Heart left ventricle (tissue), 16 donors: ENCODE measurements at regions of chr20 and their contacts with region 1.

Region 1: GRCh38 chr20:34834459-34834893 is 9.0 kb upstream of the NCOA6 start:
- DNase-seq: no peak
- ATAC-seq: no peak
- H3K4me3 ChIP-seq: no peak overlapping the region
- H3K27ac ChIP-seq: no peak overlapping the region
- H3K4me1 ChIP-seq: no peaks in the 10 kb centered on the region
- H3K27me3 ChIP-seq: no peaks in the 10 kb centered on the region
- CTCF ChIP-seq: peak; percentile 34 to 64 (median 50)
- POLR2A ChIP-seq: no peak

Region 2: DNA sequence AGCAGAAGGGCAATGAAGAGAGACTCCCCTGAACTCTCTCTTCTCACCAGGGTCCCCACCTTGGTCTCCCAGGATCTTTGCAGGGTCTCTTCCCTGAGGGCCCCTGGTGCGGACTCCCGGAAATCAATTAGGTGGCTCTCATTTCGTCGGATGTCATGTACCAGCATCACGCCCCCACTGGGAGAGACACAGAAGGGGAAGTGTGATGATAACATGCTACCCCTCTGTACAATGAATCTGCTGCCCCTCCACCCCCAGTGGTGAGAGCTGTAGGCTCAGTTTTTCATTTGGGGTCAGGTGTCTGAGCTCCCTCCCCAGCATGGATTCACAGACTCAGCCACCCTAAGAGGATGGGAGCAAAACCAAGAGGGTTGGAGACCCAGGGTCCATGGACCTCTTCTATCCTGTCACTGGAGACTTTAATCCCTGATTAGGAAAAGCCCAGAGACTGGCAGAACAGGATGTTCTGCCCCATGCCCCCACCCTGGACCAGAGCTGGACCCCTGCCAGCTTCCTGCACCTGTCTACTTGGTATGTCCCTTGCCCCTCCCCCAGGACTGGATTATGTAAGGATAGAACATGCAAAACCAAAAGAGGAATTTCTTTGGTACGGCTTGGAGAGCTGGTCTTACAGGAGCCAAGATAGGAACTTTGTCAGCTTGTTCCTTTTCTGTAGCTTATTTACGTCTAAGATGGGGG is 27.1 kb after region 1 on chr20:
- intact Hi-C with region 1: no loop called
- DNase-seq: no peak
- ATAC-seq: no peak
- H3K4me3 ChIP-seq: no peak overlapping the region
- H3K27ac ChIP-seq: no peak overlapping the region
- H3K4me1 ChIP-seq: peaks cover 0 to 8% (median 0%) of the 10 kb centered on the region in 12 donors
- H3K27me3 ChIP-seq: no peaks in the 10 kb centered on the region
- CTCF ChIP-seq: no peak
- POLR2A ChIP-seq: no peak

Region 3: DNA sequence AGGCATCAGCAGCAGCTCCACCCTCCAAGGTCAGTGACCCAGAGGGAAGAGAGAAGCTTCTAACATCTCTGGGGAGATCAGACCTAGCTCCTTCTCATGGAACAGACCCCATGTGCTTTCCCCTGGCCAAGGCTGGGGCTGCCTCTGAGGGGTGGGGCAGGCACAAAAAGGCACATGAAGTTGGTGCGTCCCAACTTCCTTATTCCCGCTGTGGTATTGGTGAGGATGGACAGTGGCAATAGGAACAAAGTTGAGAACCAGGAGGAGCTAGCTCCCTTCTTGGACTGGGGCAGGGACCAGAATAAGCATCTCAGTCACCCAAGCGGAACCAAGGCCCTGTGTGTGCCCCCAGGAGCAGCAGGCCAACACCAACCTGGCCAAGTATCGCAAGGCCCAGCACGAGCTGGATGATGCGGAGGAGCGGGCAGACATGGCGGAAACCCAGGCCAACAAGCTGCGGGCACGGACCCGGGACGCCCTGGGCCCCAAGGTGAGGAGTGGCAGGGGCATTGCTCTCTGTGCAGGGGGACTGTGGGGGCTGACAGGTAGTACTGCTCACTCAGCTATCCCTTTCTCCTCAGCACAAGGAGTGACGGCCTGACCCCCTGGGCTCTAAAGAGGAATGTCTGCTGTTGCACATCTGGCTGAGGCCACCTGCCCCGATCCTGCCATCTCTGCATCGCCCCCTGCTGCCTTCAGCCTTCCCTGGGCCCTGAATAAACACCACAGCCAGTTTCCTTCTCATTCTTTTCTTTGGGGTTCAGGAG is 167.3 kb after region 1 on chr20:
- intact Hi-C with region 1: no loop called
- DNase-seq: peak in 2 of 5 donors; percentile 27 to 53
- ATAC-seq: peak in 1 of 4 donors; percentile 0
- H3K4me3 ChIP-seq: no peak overlapping the region
- H3K27ac ChIP-seq: peak overlapping the region in 1 of 12 donors; percentile 61
- H3K4me1 ChIP-seq: peaks cover 0 to 17% (median 0%) of the 10 kb centered on the region in 12 donors
- H3K27me3 ChIP-seq: no peaks in the 10 kb centered on the region
- CTCF ChIP-seq: peak in 2 of 12 donors; percentile 14 to 26
- POLR2A ChIP-seq: no peak

Region 4: DNA sequence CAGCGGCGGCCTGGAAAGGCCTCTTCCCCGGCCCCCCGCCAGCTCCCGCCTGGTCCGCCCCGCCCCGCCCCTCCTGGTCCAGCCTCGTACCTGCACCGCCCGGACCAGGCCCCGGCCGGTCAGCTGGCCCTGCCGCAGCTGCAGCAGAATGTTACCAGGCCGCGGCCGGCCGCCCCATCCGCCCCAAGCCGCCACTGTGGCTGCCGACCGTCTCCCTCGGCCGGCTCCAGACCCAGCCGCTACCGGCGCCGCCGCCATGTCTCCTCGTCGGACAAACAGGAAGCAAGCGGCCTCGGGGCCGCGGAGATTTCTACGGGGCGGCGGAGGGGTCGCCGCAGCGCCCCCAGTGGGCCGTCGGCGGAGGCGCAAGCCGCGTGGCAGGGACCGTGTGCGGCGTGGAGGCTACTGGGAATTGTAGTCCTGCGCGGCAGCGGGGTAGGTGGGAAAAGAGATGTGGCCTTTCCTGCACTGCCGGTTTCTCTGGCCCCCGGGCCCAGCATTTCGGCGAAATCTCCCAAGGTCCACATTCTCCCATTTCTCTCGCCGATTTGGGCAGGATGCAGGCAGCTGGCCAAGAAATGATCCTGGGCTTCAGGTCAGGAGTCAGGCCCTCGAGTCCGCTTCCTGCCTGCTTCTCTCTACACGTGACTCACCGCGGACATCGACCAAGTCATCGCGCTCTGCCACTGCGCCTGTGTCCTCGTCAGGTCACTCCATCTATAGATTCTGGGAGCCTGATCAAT is 258.2 kb after region 1 on chr20 and contains the start of gene TRPC4AP:
- intact Hi-C with region 1: loop called in 2 of 10 experiments (anchors 5 to 10 kb)
- DNase-seq: peak; percentile 89 to 96 (median 91)
- ATAC-seq: peak; percentile 85 to 97 (median 94)
- H3K4me3 ChIP-seq: peak within 1 kb of the TSS; percentile 68 to 97 (median 84)
- H3K27ac ChIP-seq: peak within 1 kb of the TSS; percentile 76 to 97 (median 92)
- H3K4me1 ChIP-seq: peaks cover 4 to 47% (median 35%) of the 10 kb centered on the region in 12 donors
- H3K27me3 ChIP-seq: no peaks in the 10 kb centered on the region
- CTCF ChIP-seq: peak in 11 of 12 donors; percentile 94 to 99 (median 97)
- POLR2A ChIP-seq: peak in 1 of 2 donors; percentile 63
- total RNA-seq, gene TRPC4AP: 31.5 to 51.8 (median 38.6) TPM

Region 5: DNA sequence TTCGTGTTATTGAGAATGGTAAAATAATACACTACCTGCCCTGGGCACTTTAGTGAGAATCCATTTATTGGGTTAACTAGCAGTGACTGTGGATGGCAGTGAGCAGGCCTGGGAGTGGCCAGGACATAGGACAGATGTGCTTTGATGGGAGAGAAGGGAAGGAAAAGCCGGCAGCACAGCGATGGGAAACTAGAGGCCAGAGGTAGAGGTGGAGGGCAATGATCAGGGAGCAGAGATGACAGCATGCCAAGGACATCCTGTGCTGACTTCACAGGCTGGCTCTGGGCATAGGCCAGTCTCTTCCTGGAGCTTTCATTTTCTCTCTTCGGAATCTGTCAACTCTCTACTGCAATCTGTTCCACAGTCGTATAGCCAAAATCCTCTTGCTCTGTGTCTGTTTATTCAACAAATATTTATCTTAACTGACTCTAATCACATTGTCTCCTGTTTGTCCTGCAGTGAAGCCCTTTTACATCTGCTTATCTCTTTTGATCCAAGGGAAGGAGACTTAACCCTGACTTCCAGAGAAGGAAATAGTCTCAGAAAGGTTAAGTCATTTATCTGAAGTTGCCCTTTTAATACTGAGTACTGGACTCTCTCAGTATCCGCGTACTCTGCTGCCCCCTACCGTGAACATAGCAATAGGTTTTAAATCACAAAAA is 373.6 kb after region 1 on chr20:
- intact Hi-C with region 1: loop called in 3 of 10 experiments (anchors 5 to 10 kb)
- DNase-seq: peak; percentile 78 to 89 (median 83)
- ATAC-seq: peak; percentile 91 to 96 (median 94)
- H3K4me3 ChIP-seq: peak overlapping the region in 8 of 12 donors; percentile 2 to 35 (median 22)
- H3K27ac ChIP-seq: peak overlapping the region; percentile 19 to 80 (median 71)
- H3K4me1 ChIP-seq: peaks cover 0 to 13% (median 6%) of the 10 kb centered on the region in 12 donors
- H3K27me3 ChIP-seq: no peaks in the 10 kb centered on the region
- CTCF ChIP-seq: peak; percentile 75 to 88 (median 82)
- POLR2A ChIP-seq: no peak

Region 6: GRCh38 chr20:35215066-35215956 is 380.8 kb after region 1 on chr20:
- intact Hi-C with region 1: loop called in 1 of 10 experiments (anchors 10 kb)
- DNase-seq: no peak
- ATAC-seq: no peak
- H3K4me3 ChIP-seq: no peak overlapping the region
- H3K27ac ChIP-seq: no peak overlapping the region
- H3K4me1 ChIP-seq: no peaks in the 10 kb centered on the region
- H3K27me3 ChIP-seq: no peaks in the 10 kb centered on the region
- CTCF ChIP-seq: no peak
- POLR2A ChIP-seq: no peak

Region 7: GRCh38 chr20:35277531-35278395 is 443.3 kb after region 1 on chr20 and contains the start of gene MMP24OS:
- intact Hi-C with region 1: loop called in 1 of 10 experiments (anchors 10 kb)
- DNase-seq: peak; percentile 91 to 96 (median 95)
- ATAC-seq: peak; percentile 87 to 96 (median 94)
- H3K4me3 ChIP-seq: peak within 1 kb of the TSS; percentile 56 to 100 (median 88)
- H3K27ac ChIP-seq: peak within 1 kb of the TSS; percentile 88 to 100 (median 98)
- H3K4me1 ChIP-seq: peaks cover 2 to 36% (median 13%) of the 10 kb centered on the region in 12 donors
- H3K27me3 ChIP-seq: no peaks in the 10 kb centered on the region
- CTCF ChIP-seq: peak in 6 of 12 donors; percentile 12 to 43 (median 23)
- POLR2A ChIP-seq: peak; percentile 88 to 96
- total RNA-seq, gene MMP24OS: 17.5 to 64.8 (median 41.6) TPM

Region 8: GRCh38 chr20:35432430-35432735 is 597.9 kb after region 1 on chr20:
- intact Hi-C with region 1: loop called in 1 of 10 experiments (anchors 10 kb)
- DNase-seq: no peak
- ATAC-seq: no peak
- H3K4me3 ChIP-seq: no peak overlapping the region
- H3K27ac ChIP-seq: no peak overlapping the region
- H3K4me1 ChIP-seq: no peaks in the 10 kb centered on the region
- H3K27me3 ChIP-seq: no peaks in the 10 kb centered on the region
- CTCF ChIP-seq: no peak
- POLR2A ChIP-seq: no peak

Region 9: GRCh38 chr20:35447082-35447789 is 612.8 kb after region 1 on chr20:
- intact Hi-C with region 1: loop called in 3 of 10 experiments (anchors 10 kb)
- DNase-seq: peak; percentile 74 to 91 (median 81)
- ATAC-seq: peak; percentile 67 to 90 (median 88)
- H3K4me3 ChIP-seq: peak overlapping the region in 11 of 12 donors; percentile 10 to 51 (median 38)
- H3K27ac ChIP-seq: no peak overlapping the region
- H3K4me1 ChIP-seq: peaks cover 0 to 3% (median 0%) of the 10 kb centered on the region in 12 donors
- H3K27me3 ChIP-seq: no peaks in the 10 kb centered on the region
- CTCF ChIP-seq: peak; percentile 84 to 98 (median 93)
- POLR2A ChIP-seq: no peak